Motor neuron (in vitro differentiated cells): ENCODE measurements at regions of chr4 and their contacts with region 1.

Region 1: DNA sequence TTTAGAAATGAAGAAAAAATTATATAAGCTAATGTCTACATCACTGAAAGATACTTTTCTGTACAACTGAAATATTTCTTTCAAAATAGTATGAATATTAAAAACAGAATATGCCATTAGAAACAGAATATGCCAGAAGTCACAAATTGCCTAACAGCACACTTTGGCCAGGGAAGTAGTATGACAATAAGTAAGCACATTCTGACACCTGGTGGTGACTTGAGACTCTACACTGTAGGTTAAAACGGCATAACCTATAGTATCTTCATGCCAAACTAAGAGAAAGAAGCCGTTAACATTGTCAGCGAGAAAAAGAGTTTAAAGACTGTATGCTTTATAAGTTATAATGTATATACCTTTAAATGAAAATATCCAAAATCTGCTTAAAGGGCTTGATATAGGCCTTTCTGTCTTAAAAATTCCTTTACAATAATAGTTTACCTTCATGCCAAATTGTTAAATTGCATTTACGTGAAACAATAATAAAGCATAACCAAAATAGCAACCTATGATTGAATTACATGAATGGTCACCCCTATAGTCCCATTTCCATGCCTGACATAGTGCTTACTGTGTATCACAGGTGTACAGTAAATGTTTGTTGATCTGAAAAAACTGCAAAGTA is 32.8 kb downstream of the FAM13A start:
- ATAC-seq: peak; percentile 76 to 93 (median 88)
- H3K4me3 ChIP-seq: no peak overlapping the region
- H3K27ac ChIP-seq: no peak overlapping the region
- H3K4me1 ChIP-seq: no peaks in the 10 kb centered on the region

Region 2: GRCh38 chr4:88706574-88706973 is 317.6 kb before region 1 on chr4:
- in situ Hi-C with region 1: loop called in 3 of 9 experiments (anchors 25 kb)
- ATAC-seq: peak in 5 of 8 experiments; percentile 37 to 95 (median 92)
- H3K4me3 ChIP-seq: no peak overlapping the region
- H3K27ac ChIP-seq: no peak overlapping the region
- H3K4me1 ChIP-seq: no peaks in the 10 kb centered on the region

Region 3: DNA sequence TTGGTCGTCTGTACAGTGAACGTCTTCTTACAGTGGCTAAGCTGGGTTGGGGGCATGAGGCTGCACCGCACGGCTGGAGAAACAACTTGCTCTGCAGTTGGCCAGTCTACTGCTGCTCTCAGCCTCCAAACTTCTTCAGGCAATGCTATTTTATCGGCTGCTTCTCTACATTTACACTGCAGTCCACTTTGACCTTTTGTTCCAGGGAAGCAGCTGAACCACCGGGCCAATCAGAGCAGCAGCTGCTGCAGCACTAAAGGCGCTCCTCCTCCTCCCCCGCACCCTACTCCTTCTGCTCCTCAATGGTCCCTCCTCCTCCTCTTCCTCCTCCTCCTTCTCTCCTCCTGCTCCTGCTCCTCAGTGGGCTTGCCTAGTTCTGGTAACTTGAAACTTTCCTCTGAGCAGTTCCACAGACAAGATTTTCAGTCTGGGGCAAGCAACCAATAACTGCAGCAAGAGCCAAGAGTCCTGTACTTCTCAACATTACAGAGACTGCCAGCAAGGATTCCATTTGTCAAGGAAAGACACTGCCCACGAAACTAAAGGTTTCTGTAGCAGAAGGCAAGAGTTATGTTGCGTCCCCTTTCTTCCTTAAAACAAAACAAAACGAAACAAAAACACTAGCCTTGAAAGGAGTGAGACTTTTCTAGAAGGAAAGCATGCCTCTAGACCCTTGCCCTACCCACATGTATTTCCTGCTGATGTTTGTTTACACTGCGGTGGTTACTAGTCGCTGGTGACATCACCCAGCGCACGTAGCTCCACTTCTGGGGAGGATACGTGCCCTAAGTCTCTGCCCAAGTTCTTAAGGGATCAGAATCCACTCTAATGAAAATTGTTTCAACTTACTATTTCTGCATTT is 200.9 kb before region 1 on chr4:
- in situ Hi-C with region 1: loop called in 3 of 9 experiments (anchors 10 to 25 kb)
- ATAC-seq: peak; percentile 84 to 95 (median 88)
- H3K4me3 ChIP-seq: peak overlapping the region; percentile 21 to 40 (median 32)
- H3K27ac ChIP-seq: peak overlapping the region; percentile 4 to 38
- H3K4me1 ChIP-seq: peaks cover 12 to 28% of the 10 kb centered on the region in 2 donors

Region 4: GRCh38 chr4:89331686-89332544 is 307.8 kb after region 1 on chr4:
- in situ Hi-C with region 1: no loop called
- ATAC-seq: peak in 1 of 8 experiments; percentile 34
- H3K4me3 ChIP-seq: no peak overlapping the region
- H3K27ac ChIP-seq: no peak overlapping the region
- H3K4me1 ChIP-seq: no peaks in the 10 kb centered on the region